Activated T-helper 1 cell treated with anti-CD3 and anti-CD28 coated beads, Interleukin-12 subunit alpha, Interleukin-12 subunit beta, Interleukin-2, Interleukin-4 antibody, amounts not matched to agents 30 ng/mL and 10 ng/mL and 1 ng/mL, durations not matched to agents 14 hours and 24 hours and 36 hours (primary cell): ENCODE measurements at regions of chr11 and their contacts with region 1.

Region 1: DNA sequence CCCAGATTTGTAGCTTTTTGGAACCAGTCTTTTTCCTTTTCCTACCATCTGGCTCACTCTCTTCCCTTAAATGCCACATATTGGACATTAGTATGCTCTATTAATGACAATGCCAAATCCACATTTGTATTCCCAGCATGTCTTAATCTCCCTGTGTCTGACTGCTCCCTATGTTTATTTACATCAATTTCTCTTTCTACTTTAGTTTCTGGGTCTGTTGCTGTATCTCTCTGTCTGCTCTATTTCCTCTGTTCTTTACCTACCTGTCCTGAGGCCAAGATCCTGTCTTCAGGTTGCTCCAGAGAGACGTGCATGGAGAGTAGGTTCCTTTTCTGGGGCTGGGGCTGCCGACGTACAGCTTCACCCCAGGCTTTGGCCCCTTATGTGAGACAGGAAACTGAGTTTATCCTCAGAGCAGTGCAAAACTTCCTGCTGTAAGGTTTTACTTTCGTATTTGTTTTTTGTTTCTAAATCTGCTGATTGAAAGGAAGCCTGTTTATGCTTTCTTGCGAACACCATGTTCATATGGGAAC is 25.6 kb downstream of the OR2AG2 start:
- DNase-seq: peak; percentile 40
- H3K4me3 Mint-ChIP-seq: no peak overlapping the region
- H3K27ac Mint-ChIP-seq: no peak overlapping the region
- H3K4me1 Mint-ChIP-seq: no peaks in the 10 kb centered on the region
- H3K27me3 Mint-ChIP-seq: no peaks in the 10 kb centered on the region

Region 2: DNA sequence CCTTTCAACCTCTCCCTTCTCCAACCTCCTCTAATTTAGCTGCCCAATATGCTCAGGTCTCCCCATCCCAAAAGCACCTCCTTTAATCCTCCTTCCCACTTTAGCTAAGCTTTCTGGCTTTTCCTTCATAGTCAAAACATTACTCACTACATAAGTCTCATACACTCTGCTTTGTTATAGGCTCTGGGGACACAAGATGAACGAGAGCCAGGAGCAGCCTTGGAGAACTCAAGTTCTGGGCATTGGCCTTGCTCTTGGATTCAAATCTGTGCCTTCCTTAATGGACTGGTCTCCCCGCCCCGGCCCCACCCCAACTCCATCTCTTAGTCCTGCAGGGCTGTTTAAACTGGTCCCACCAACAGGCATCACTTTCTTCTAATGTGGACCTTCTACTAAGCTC is 293.9 kb before region 1 on chr11:
- intact Hi-C with region 1: no loop called
- DNase-seq: no peak
- H3K4me3 Mint-ChIP-seq: no peak overlapping the region
- H3K27ac Mint-ChIP-seq: no peak overlapping the region
- H3K4me1 Mint-ChIP-seq: no peaks in the 10 kb centered on the region
- H3K27me3 Mint-ChIP-seq: no peaks in the 10 kb centered on the region

Region 3: DNA sequence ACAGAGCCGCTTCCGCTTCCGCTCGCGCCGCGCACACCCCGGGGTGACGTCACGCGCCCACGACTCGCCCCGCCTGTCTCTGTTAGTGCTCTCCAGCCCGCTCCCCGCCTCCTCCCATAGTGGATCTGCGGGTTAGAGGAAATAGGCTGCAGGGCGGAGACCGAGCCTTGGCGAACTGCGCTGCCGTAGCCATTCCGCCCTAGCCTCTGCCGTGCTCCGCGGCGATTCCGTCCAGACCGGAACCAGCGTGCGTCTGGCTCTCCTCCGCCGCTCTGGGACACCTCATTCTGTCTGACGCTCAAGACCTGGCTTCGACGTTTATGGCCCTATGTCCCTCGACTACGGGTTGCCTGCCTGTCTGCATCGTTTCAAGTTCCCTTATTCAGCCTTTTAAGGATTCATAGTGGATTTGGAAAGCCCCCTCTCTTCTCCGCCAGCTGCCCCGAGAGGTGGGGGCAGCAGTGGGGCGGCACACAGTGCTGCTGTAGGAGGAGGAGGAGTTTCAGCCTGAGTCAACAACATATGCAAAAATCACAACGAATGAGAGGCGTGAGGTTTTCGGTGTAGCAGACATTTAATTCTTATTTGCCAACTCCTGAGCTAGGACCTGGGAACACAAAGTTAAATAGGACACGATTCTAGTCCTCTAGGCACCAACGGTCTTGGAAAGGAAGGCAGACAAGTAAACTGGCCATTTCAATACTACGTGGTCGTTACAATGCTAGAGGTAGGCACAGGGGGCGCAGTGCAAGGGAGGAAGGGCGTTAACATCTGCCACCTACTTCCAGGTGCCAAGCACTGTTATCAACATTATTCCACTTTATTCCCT is 133.7 kb before region 1 on chr11 and contains the start of gene TAF10:
- intact Hi-C with region 1: loop called (anchors 2 kb)
- DNase-seq: peak; percentile 95
- H3K4me3 Mint-ChIP-seq: peak within 1 kb of the TSS; percentile 93
- H3K27ac Mint-ChIP-seq: peak within 1 kb of the TSS; percentile 87
- H3K4me1 Mint-ChIP-seq: peaks cover 29% of the 10 kb centered on the region
- H3K27me3 Mint-ChIP-seq: no peaks in the 10 kb centered on the region
- total RNA-seq, gene TAF10: 155 and 166 TPM in 2 replicates

Region 4: GRCh38 chr11:6926208-6927029 is 180.3 kb after region 1 on chr11 and contains the start of gene ZNF215:
- intact Hi-C with region 1: loop called (anchors 5 kb)
- DNase-seq: peak; percentile 33
- H3K4me3 Mint-ChIP-seq: peak within 1 kb of the TSS; percentile 86
- H3K27ac Mint-ChIP-seq: peak within 1 kb of the TSS; percentile 46
- H3K4me1 Mint-ChIP-seq: peaks cover 23% of the 10 kb centered on the region
- H3K27me3 Mint-ChIP-seq: peaks cover 28% of the 10 kb centered on the region
- total RNA-seq, gene ZNF215: 1.8 and 2.1 TPM in 2 replicates

Region 5: DNA sequence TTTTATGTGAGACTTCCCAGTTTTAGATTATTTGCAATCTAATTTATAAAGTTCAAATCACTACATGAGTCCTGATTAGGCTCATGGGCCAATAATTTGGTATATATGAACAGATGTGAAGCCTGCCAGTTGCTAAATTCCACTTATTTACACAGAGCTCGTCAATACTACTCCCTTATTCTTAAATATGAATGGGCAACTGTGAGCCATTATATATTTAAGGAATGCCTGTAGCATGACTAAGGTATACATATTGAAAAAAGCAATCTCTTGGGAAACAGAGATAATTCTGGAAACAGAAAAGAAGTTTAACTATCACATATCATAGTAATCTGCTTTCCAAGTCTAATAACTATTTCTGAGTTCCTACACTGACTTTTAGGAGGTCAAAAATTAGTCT is 369.6 kb after region 1 on chr11:
- intact Hi-C with region 1: no loop called
- DNase-seq: no peak
- H3K4me3 Mint-ChIP-seq: no peak overlapping the region
- H3K27ac Mint-ChIP-seq: no peak overlapping the region
- H3K4me1 Mint-ChIP-seq: no peaks in the 10 kb centered on the region
- H3K27me3 Mint-ChIP-seq: peaks cover 2% of the 10 kb centered on the region